ENCODE measurements at regions of chr4 and their contacts with region 1.

Region 1: DNA sequence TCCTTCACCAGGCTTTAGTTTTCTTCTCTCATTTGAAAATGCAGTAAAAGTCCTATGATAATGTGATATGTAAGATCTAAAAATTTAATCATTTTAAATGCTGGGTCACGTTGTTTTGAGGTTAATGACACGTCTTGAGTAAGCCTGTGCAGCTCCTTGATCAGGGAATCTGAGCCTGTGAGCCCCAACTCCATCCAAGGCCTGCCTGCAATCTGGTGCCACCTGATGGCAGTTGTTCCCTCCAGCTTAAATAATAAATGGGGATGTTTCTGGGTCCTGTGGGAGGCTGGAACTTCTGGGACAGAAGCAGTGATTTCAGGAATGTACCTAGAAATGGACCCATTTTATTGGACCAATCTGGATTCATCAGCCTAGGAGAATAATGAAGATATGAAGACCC is 455.4 kb upstream of the ADGRL3 start:
- DNase-seq: peak; percentile 23
- H3K4me3 ChIP-seq: no peak overlapping the region
- H3K27ac ChIP-seq: no peak overlapping the region
- H3K4me1 ChIP-seq: no peaks in the 10 kb centered on the region
- H3K27me3 ChIP-seq: no peaks in the 10 kb centered on the region
- CTCF ChIP-seq: peak; percentile 9 to 50

Region 2: GRCh38 chr4:60544981-60545380 is 199.8 kb before region 1 on chr4:
- CTCF ChIA-PET with region 1: interaction called, 3 read pairs
- dilution Hi-C with region 1: no loop called
- in situ Hi-C with region 1: no loop called
- intact Hi-C with region 1: loop called (anchors 10 kb)
- DNase-seq: no peak
- H3K4me3 ChIP-seq: no peak overlapping the region
- H3K27ac ChIP-seq: no peak overlapping the region
- H3K4me1 ChIP-seq: no peaks in the 10 kb centered on the region
- H3K27me3 ChIP-seq: no peaks in the 10 kb centered on the region
- CTCF ChIP-seq: no peak

Measured in mammary epithelial cell (primary cell).